Spleen (tissue), 13 donors: ENCODE measurements at regions of chr12 and their contacts with region 1.

Region 1: DNA sequence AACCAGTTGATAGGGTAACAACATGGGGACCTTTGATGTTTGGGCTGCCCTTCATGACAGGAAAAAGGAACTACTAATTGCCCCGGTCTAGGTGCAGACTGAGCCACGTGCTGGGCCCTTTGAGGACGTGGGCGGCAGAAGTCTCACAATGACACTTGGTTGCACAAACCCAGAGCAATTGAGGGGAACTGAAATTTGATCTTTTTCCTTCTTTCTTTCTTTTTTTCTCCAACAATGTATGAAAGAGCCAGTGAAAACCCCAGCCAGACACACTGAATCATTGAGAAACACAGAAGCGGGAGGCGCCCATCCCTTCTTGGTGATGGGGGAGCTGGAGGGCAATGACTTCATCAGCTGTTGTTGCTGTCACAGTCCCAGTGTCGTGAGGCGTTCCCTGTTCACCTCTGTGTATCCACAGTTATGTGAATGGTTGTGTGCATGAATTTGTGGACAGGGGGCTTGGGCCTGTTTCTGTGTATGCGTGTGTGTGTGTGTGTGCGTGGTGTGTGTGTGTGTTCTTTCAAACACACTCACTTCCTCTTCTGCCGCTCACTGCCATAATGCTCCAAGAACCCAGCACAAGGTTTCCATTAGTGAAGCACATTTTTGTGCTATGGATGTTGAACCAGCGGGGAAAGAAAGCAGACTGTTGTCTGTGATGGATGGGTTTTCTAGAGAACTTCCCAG is 137.5 kb upstream of the CCND2 start:
- DNase-seq: peak; percentile 87
- H3K4me3 ChIP-seq: no peak overlapping the region
- H3K27ac ChIP-seq: peak overlapping the region in 4 of 8 donors; percentile 31 to 45 (median 42)
- H3K4me1 ChIP-seq: peaks cover 6 to 41% (median 26%) of the 10 kb centered on the region in 6 donors
- H3K27me3 ChIP-seq: no peaks in the 10 kb centered on the region
- CTCF ChIP-seq: no peak
- POLR2A ChIP-seq: no peak

Region 2: DNA sequence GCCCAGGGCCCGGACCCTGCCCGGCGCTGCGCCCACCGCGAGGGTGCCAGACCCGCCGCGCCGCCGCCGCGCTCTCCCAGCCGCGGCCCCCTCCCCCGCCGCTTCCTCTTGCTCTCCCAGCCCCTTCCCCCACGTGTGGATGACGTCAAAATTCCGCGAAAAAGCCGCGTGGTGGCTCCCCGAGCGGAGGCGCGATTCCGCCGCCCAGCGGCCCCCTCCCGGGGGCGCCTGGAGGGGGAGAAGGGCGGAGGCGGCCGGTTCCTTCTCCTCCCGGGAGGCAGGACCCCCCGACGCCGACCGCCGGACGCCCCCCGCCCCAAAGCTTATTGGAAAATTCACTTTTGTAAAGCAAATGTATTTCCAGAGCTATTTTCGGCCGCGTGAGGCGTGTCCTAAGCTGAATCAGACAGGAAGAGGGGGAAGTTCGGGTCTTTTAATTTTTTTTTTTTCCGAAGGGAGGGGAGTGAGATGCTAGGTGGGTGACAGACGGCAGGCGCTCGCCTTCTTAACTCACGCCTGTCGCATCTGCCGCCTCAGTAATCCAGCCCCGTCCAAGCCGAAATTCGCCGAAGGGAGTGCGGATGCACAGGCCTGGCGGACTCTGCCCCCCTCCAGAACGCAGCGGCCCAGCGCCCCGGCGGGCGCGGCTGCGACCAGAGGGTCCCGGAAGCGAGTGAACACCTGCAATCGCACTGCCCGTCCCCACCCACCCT is 133.4 kb after region 1 on chr12:
- intact Hi-C with region 1: loop called (anchors 10 kb)
- DNase-seq: peak; percentile 98
- H3K4me3 ChIP-seq: peak overlapping the region; percentile 44 to 74 (median 66)
- H3K27ac ChIP-seq: peak overlapping the region; percentile 74 to 98 (median 92)
- H3K4me1 ChIP-seq: peaks cover 17 to 63% (median 53%) of the 10 kb centered on the region in 6 donors
- H3K27me3 ChIP-seq: peaks cover 0 to 82% (median 55%) of the 10 kb centered on the region in 7 donors
- CTCF ChIP-seq: peak in 9 of 11 experiments; percentile 10 to 54 (median 36)
- POLR2A ChIP-seq: peak in 1 of 3 donors; percentile 8